ENCODE measurements at regions of chr7 and their contacts with region 1.

Region 1: DNA sequence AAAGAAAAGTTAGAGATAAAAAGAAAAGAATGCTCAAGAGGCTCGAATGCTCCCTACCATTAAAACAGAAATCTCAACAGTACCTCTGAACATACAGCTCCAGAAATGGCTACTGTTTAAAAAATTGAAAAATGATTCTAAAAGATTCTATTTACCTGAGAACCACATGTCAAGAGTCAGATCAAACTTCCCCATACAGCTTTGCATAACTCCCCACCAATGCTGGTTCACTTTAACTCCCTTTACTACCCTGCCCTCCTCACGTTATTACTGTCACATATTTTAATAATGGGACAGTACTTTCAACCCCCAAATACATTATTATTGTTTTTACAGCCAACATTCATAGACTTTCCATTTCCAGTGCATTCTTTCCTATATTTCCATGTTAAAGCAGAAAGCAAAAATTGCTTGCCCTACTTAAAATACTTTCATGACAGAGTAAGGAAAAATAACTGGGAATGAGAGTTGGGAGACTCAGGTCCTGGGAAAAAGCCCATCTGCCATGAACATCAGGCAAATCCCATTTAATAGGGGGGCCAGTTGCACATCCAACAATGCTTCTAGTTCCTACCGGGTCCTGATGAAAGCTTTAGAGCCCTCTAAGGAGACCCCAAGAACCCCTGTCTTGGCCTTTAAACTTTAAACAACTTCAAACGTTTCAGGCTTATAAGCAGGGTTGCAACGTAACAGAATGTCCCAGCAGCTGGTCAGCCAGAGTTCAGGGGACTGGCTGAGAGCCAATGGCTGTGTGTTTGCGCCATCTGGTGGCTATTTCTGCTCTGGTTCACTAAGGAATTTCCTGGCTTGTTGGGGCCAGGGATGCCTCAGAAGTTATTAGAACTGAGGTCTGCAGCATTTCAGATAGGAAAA is 247.4 kb downstream of the ELMO1 start:
- DNase-seq: peak; percentile 6 to 65 (median 48)
- ATAC-seq: no peak
- H3K4me3 ChIP-seq: no peak overlapping the region
- H3K4me3 Mint-ChIP-seq: no peak overlapping the region
- H3K27ac ChIP-seq: no peak overlapping the region
- H3K27ac Mint-ChIP-seq: peak overlapping the region; percentile 34
- H3K4me1 ChIP-seq: no peaks in the 10 kb centered on the region
- H3K4me1 Mint-ChIP-seq: peaks cover 4% of the 10 kb centered on the region
- H3K27me3 ChIP-seq: no peaks in the 10 kb centered on the region
- H3K27me3 Mint-ChIP-seq: no peaks in the 10 kb centered on the region
- CTCF ChIP-seq: peak; percentile 45

Region 2: GRCh38 chr7:36315309-36316133 is 885.7 kb before region 1 on chr7:
- CTCF ChIA-PET with region 1: interaction called, 7 read pairs
- POLR2A ChIA-PET with region 1: no interaction called
- intact Hi-C with region 1: loop called in 1 of 2 experiments (anchors 5 kb)
- DNase-seq: peak in 1 of 9 experiments; percentile 11
- ATAC-seq: no peak
- H3K4me3 ChIP-seq: no peak overlapping the region
- H3K4me3 Mint-ChIP-seq: no peak overlapping the region
- H3K27ac ChIP-seq: no peak overlapping the region
- H3K27ac Mint-ChIP-seq: no peak overlapping the region
- H3K4me1 ChIP-seq: no peaks in the 10 kb centered on the region
- H3K4me1 Mint-ChIP-seq: peaks cover 2% of the 10 kb centered on the region
- H3K27me3 ChIP-seq: no peaks in the 10 kb centered on the region
- H3K27me3 Mint-ChIP-seq: no peaks in the 10 kb centered on the region
- CTCF ChIP-seq: no peak

Region 3: GRCh38 chr7:36473454-36474282 is 727.6 kb before region 1 on chr7:
- CTCF ChIA-PET with region 1: interaction called, 10 read pairs
- POLR2A ChIA-PET with region 1: no interaction called
- intact Hi-C with region 1: no loop called
- DNase-seq: peak in 4 of 9 experiments; percentile 13 to 25 (median 18)
- ATAC-seq: no peak
- H3K4me3 ChIP-seq: no peak overlapping the region
- H3K4me3 Mint-ChIP-seq: no peak overlapping the region
- H3K27ac ChIP-seq: no peak overlapping the region
- H3K27ac Mint-ChIP-seq: no peak overlapping the region
- H3K4me1 ChIP-seq: no peaks in the 10 kb centered on the region
- H3K4me1 Mint-ChIP-seq: peaks cover 9% of the 10 kb centered on the region
- H3K27me3 ChIP-seq: no peaks in the 10 kb centered on the region
- H3K27me3 Mint-ChIP-seq: no peaks in the 10 kb centered on the region
- CTCF ChIP-seq: no peak

Region 4: DNA sequence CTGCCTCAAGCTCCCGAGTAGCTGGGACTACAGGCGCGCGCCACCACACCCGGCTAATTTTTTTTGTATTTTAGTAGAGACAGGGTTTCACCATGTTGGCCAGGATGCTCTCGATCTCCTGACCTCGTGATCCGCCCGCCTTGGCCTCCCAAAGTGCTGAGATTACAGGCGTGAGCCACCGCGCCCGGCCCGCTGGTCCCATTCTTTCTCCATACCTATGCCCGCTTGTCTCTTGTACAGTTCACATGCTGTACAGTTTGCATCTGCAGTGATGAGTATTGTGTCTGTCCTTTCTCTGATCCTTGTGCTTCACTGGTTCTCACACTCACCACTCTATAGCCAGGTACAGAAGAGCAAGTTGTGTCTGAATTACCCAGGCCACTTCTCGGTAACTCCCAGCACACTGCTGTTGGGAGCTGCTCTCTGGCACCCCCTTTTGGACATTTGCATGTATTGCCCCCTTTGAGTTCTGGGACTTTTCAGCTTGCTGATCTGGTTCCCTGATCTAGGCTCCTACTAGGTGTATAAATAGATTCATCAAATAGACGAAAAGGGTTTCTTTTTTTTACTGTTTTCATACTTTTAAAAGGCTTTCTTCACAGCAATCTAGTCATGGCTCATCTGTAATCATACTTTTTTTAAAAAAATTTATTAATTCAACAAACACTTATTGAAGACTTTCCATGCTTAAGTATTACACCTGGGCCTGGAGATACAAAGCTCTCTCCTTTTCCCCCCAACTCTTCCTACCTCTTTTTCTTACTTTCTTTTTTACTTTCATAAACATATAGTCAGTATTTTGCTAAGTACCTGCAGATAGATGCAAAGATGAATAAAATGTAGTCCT is 530.4 kb before region 1 on chr7:
- CTCF ChIA-PET with region 1: interaction called, 28 read pairs
- POLR2A ChIA-PET with region 1: interaction called, 3 read pairs
- intact Hi-C with region 1: no loop called
- DNase-seq: peak; percentile 43 to 88 (median 72)
- ATAC-seq: peak; percentile 94
- H3K4me3 ChIP-seq: no peak overlapping the region
- H3K4me3 Mint-ChIP-seq: peak overlapping the region; percentile 16
- H3K27ac ChIP-seq: no peak overlapping the region
- H3K27ac Mint-ChIP-seq: peak overlapping the region; percentile 73
- H3K4me1 ChIP-seq: peaks cover 20% of the 10 kb centered on the region
- H3K4me1 Mint-ChIP-seq: peaks cover 39% of the 10 kb centered on the region
- H3K27me3 ChIP-seq: no peaks in the 10 kb centered on the region
- H3K27me3 Mint-ChIP-seq: no peaks in the 10 kb centered on the region
- CTCF ChIP-seq: peak; percentile 89

Region 5: DNA sequence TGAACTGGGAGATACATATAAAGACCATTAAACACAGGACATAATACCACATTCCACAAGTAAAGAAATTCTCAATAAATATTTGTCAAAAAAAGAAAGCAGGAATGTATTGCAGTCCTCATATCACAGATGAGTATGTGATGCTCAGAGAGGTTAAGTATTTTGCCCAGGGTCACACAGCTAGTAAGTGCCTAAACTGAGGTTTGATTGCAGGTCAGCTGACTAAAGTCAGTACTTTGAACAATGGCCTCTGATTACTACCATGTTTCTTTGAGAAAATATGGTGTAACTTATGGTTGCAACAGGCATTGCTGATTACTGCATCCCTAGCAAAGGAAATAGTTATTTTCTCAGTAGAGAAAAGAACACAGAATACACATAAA is 19.7 kb before region 1 on chr7:
- CTCF ChIA-PET with region 1: interaction called, 26 read pairs
- POLR2A ChIA-PET with region 1: no interaction called
- intact Hi-C with region 1: no loop called
- DNase-seq: no peak
- ATAC-seq: no peak
- H3K4me3 ChIP-seq: no peak overlapping the region
- H3K4me3 Mint-ChIP-seq: no peak overlapping the region
- H3K27ac ChIP-seq: no peak overlapping the region
- H3K27ac Mint-ChIP-seq: no peak overlapping the region
- H3K4me1 ChIP-seq: no peaks in the 10 kb centered on the region
- H3K4me1 Mint-ChIP-seq: no peaks in the 10 kb centered on the region
- H3K27me3 ChIP-seq: no peaks in the 10 kb centered on the region
- H3K27me3 Mint-ChIP-seq: no peaks in the 10 kb centered on the region
- CTCF ChIP-seq: no peak

Region 6: GRCh38 chr7:37289367-37289766 is 88.1 kb after region 1 on chr7:
- CTCF ChIA-PET with region 1: no interaction called
- POLR2A ChIA-PET with region 1: no interaction called
- intact Hi-C with region 1: no loop called
- DNase-seq: no peak
- ATAC-seq: no peak
- H3K4me3 ChIP-seq: no peak overlapping the region
- H3K4me3 Mint-ChIP-seq: no peak overlapping the region
- H3K27ac ChIP-seq: no peak overlapping the region
- H3K27ac Mint-ChIP-seq: peak overlapping the region; percentile 82
- H3K4me1 ChIP-seq: peaks cover 12% of the 10 kb centered on the region
- H3K4me1 Mint-ChIP-seq: peaks cover 38% of the 10 kb centered on the region
- H3K27me3 ChIP-seq: no peaks in the 10 kb centered on the region
- H3K27me3 Mint-ChIP-seq: no peaks in the 10 kb centered on the region
- CTCF ChIP-seq: no peak

Region 7: GRCh38 chr7:38481401-38481800 is 1280.2 kb after region 1 on chr7:
- CTCF ChIA-PET with region 1: no interaction called
- POLR2A ChIA-PET with region 1: no interaction called
- intact Hi-C with region 1: no loop called
- DNase-seq: no peak
- ATAC-seq: no peak
- H3K4me3 ChIP-seq: no peak overlapping the region
- H3K4me3 Mint-ChIP-seq: no peak overlapping the region
- H3K27ac ChIP-seq: no peak overlapping the region
- H3K27ac Mint-ChIP-seq: no peak overlapping the region
- H3K4me1 ChIP-seq: no peaks in the 10 kb centered on the region
- H3K4me1 Mint-ChIP-seq: no peaks in the 10 kb centered on the region
- H3K27me3 ChIP-seq: peaks cover 0 to 2% of the 10 kb centered on the region in 2 experiments
- H3K27me3 Mint-ChIP-seq: peaks cover 19% of the 10 kb centered on the region
- CTCF ChIP-seq: no peak